ENCODE measurements at regions of chr12 and their contacts with region 1.

Region 1: GRCh38 chr12:31728917-31729640 is at the start of gene AMN1:
- DNase-seq: peak; percentile 99
- ATAC-seq: peak; percentile 96
- H3K4me3 ChIP-seq: peak within 1 kb of the TSS; percentile 79
- H3K27ac ChIP-seq: peak within 1 kb of the TSS; percentile 97
- H3K4me1 ChIP-seq: peaks cover 17% of the 10 kb centered on the region
- H3K27me3 ChIP-seq: no peaks in the 10 kb centered on the region
- CTCF ChIP-seq: no peak
- EP300 ChIP-seq: peak in 1 of 2 experiments; percentile 46; a peak in 1 of 4 replicates
- POLR2A ChIP-seq: peak; percentile 92
- RAD21 ChIP-seq: no peak
- polyA plus RNA-seq, gene AMN1: 15.2 to 19.3 TPM

Region 2: DNA sequence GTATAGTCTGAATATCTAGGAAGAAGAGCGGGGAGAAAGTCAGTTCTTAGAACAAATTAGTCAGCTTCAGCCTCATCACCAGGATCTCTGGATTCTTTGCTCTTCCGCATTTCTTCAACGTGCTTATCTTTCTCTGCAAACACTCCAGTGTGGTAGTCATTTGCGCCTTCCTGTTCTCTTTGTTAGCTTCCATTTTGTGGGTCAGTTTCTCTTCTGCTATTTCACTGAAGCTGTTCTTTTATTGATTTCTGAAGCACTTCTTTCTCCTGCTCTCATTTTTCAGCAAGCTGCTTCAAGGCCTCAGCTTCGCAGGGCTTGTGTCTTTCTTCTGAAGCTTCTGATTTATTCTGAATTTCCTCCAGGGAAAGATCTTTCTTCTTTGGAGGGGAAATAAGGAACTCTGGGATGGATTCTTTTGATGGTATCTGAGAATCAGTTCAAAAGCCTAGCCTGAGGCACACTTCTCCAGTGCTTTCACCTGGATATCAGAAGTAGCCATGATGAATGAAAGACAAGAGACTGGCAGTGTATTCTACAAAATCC is 13.7 kb before region 1 on chr12:
- CTCF ChIA-PET with region 1: interaction called, 5 read pairs
- POLR2A ChIA-PET with region 1: interaction called, 14 read pairs
- RAD21 ChIA-PET with region 1: interaction called, 25 read pairs
- SMC1A ChIA-PET with region 1: interaction called, 33 read pairs
- in situ Hi-C with region 1: no loop called
- intact Hi-C with region 1: no loop called
- DNase-seq: peak; percentile 77
- ATAC-seq: peak; percentile 95
- H3K4me3 ChIP-seq: peak overlapping the region; percentile 54; the same call in 1 of the 2 replicates
- H3K27ac ChIP-seq: peak overlapping the region; percentile 90
- H3K4me1 ChIP-seq: peaks cover 10% of the 10 kb centered on the region
- H3K27me3 ChIP-seq: no peaks in the 10 kb centered on the region
- CTCF ChIP-seq: no peak
- EP300 ChIP-seq: peak in 1 of 2 experiments; percentile 35; a peak in 1 of 4 replicates
- POLR2A ChIP-seq: no peak
- RAD21 ChIP-seq: peak; percentile 13

Region 3: GRCh38 chr12:31742891-31743290 is 13.8 kb after region 1 on chr12:
- CTCF ChIA-PET with region 1: interaction called, 19 read pairs
- POLR2A ChIA-PET with region 1: interaction called, 82 read pairs
- RAD21 ChIA-PET with region 1: interaction called, 49 read pairs
- SMC1A ChIA-PET with region 1: interaction called, 66 read pairs
- in situ Hi-C with region 1: no loop called
- intact Hi-C with region 1: no loop called
- DNase-seq: no peak
- ATAC-seq: no peak; the same call in 2 of the 3 replicates
- H3K4me3 ChIP-seq: no peak overlapping the region
- H3K27ac ChIP-seq: no peak overlapping the region
- H3K4me1 ChIP-seq: peaks cover 27% of the 10 kb centered on the region
- H3K27me3 ChIP-seq: no peaks in the 10 kb centered on the region
- CTCF ChIP-seq: no peak
- EP300 ChIP-seq: no peak
- POLR2A ChIP-seq: no peak
- RAD21 ChIP-seq: no peak

Region 4: GRCh38 chr12:31859232-31859977 is 130.3 kb after region 1 on chr12:
- CTCF ChIA-PET with region 1: no interaction called
- POLR2A ChIA-PET with region 1: no interaction called
- RAD21 ChIA-PET with region 1: no interaction called
- SMC1A ChIA-PET with region 1: no interaction called
- in situ Hi-C with region 1: no loop called
- intact Hi-C with region 1: no loop called
- DNase-seq: peak; percentile 63
- ATAC-seq: peak; percentile 90
- H3K4me3 ChIP-seq: no peak overlapping the region; the same call in 1 of the 2 replicates
- H3K27ac ChIP-seq: peak overlapping the region; percentile 74
- H3K4me1 ChIP-seq: peaks cover 6% of the 10 kb centered on the region; the same call in 1 of the 2 replicates
- H3K27me3 ChIP-seq: no peaks in the 10 kb centered on the region
- CTCF ChIP-seq: no peak
- EP300 ChIP-seq: no peak
- POLR2A ChIP-seq: no peak
- RAD21 ChIP-seq: no peak

Region 5: DNA sequence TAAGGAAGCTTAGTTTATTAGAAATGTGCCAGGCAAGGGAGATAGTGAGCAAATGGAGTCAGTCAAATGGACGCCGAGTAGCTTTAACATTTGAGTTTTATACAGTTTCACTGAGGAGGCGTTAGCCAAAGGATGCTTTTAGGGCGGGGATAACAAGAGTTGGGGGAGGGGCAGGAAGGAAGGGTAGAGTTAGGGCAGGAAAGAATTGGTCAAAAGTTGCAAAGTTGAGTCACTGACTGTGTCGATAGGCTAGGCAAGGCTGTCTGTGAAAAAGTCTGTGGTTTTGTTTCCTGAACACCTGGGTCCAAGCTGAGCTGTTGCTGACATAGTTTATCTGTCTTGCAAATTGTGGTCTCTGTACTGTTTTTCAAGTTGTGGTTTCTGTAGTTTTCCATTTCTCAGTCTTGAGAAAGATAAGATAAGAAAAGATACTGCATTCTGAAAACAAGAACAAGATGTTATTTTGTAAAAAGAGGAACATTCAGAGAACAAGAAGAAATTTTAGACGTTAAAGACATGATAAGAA is 167.5 kb after region 1 on chr12:
- CTCF ChIA-PET with region 1: no interaction called
- POLR2A ChIA-PET with region 1: interaction called, 4 read pairs
- RAD21 ChIA-PET with region 1: no interaction called
- SMC1A ChIA-PET with region 1: no interaction called
- in situ Hi-C with region 1: no loop called
- intact Hi-C with region 1: loop called (anchors 10 kb)
- DNase-seq: peak; percentile 99
- ATAC-seq: peak; percentile 99
- H3K4me3 ChIP-seq: no peak overlapping the region
- H3K27ac ChIP-seq: peak overlapping the region; percentile 98
- H3K4me1 ChIP-seq: peaks cover 21% of the 10 kb centered on the region
- H3K27me3 ChIP-seq: no peaks in the 10 kb centered on the region
- CTCF ChIP-seq: no peak
- EP300 ChIP-seq: peak; percentile 95
- POLR2A ChIP-seq: peak; percentile 62
- RAD21 ChIP-seq: 0 out of 2 replicates have a peak, but pooled peaks have one; percentile 14

Region 6: DNA sequence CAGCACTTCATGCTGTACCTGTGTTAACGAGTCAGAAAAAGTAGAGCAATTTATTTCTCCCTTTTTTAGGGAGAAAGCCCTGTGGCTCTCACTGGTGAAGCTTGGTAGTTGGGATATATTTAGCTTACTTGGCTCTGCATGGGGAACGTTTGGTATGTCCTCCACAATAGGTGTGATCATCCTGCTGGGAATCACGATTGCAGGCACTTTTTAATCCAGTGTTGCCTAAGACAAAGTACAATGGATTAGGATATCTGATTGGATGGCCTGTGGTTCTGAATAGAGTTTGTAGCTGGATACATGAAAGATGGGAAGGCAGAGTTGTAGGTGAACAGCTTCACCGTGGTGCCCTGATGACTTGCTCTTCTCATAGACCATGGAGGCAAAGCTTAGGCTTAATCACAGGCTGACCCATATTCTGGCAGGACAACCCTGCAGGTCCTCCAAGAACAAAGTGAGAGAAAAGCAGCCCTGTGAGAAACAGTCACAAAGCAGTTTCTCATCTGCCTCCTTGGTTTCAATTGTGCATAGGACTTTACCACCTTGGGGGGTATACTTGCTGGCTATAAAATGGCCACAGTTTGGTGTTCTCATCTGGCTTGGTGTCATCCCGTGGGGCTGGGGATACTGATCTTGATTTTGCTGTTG is 237.6 kb after region 1 on chr12:
- CTCF ChIA-PET with region 1: no interaction called
- POLR2A ChIA-PET with region 1: no interaction called
- RAD21 ChIA-PET with region 1: no interaction called
- SMC1A ChIA-PET with region 1: no interaction called
- in situ Hi-C with region 1: no loop called
- intact Hi-C with region 1: no loop called
- DNase-seq: no peak
- ATAC-seq: peak; percentile 68
- H3K4me3 ChIP-seq: no peak overlapping the region; the same call in 1 of the 2 replicates
- H3K27ac ChIP-seq: peak overlapping the region; percentile 63
- H3K4me1 ChIP-seq: peaks cover 11% of the 10 kb centered on the region; the same call in 1 of the 2 replicates
- H3K27me3 ChIP-seq: no peaks in the 10 kb centered on the region
- CTCF ChIP-seq: no peak
- EP300 ChIP-seq: no peak
- POLR2A ChIP-seq: 0 out of 2 replicates have a peak, but pooled peaks have one; percentile 26
- RAD21 ChIP-seq: no peak